ENCODE measurements at regions of chr15 and their contacts with region 1.

Region 1: DNA sequence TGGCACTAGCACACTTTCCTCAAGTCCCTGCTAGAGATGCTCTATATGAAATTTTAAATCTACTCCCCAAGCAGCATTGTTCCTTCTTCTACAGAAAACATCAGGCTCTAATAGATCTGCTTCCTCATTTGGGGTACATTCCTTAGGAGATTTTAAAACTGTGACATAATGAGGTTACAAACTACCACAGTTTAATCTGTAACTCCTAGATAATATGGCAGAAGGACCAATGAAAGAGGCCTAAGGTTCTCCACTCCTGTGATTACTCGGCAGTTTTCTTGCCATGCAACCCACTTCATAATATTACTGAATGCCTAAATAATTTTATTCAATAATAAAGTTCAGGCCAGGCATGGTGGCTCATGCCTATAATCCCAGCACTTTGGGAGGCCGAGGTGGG is 16.1 kb downstream of the ZNF106 start:
- DNase-seq: no peak
- H3K4me3 ChIP-seq: no peak overlapping the region
- H3K27ac ChIP-seq: no peak overlapping the region
- H3K4me1 ChIP-seq: no peaks in the 10 kb centered on the region
- H3K27me3 ChIP-seq: no peaks in the 10 kb centered on the region
- CTCF ChIP-seq: no peak

Region 2: GRCh38 chr15:41989259-41989933 is 485.4 kb before region 1 on chr15:
- CTCF ChIA-PET with region 1: no interaction called
- dilution Hi-C with region 1: no loop called
- in situ Hi-C with region 1: no loop called
- intact Hi-C with region 1: loop called (anchors 10 kb)
- DNase-seq: peak; percentile 53
- H3K4me3 ChIP-seq: no peak overlapping the region
- H3K27ac ChIP-seq: no peak overlapping the region
- H3K4me1 ChIP-seq: no peaks in the 10 kb centered on the region
- H3K27me3 ChIP-seq: no peaks in the 10 kb centered on the region
- CTCF ChIP-seq: peak; percentile 98 to 99

Region 3: DNA sequence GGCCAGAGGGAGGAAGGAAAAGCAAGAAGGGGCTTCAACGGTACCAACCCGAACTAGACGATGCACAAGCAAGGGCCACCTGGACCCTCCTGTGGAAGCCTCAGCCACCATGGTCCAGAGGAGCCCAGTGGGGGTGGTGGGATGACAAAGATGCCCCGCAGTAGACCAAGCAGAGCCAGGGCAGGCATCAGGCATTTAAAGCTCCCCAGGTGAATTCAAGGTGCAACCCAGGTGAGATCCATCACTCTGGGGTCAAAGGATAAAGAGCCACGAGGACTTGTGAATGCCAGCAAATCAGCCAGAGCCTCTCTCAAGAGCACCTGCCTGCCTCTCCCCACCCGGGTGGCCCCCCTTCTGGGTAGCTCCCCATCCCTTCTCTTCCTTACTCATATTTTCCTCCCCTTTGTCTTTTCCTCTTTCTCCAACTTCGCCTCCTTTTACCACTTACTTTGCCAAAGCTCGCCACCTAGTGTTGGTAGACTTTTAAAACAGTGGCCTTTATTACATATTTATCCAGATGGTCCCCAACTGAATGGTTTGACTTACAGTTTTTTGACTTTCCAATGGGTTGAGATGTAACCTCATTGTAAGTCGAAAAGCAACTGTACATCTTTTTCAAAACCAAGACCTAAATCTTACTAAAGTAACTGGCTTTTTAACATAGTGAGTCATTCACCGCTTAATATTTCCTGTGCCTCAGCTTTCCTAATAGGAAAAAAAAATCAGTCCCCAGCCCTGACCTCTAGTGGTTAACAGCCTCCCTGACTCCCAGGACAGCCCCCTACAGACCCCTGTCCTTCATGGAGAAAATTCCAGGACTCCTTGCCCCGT is 337.2 kb before region 1 on chr15:
- CTCF ChIA-PET with region 1: no interaction called
- dilution Hi-C with region 1: no loop called
- in situ Hi-C with region 1: no loop called
- intact Hi-C with region 1: loop called (anchors 5 kb)
- DNase-seq: peak; percentile 40
- H3K4me3 ChIP-seq: no peak overlapping the region
- H3K27ac ChIP-seq: no peak overlapping the region
- H3K4me1 ChIP-seq: no peaks in the 10 kb centered on the region
- H3K27me3 ChIP-seq: no peaks in the 10 kb centered on the region
- CTCF ChIP-seq: peak; percentile 53 to 68

Region 4: GRCh38 chr15:42273102-42273899 is 201.5 kb before region 1 on chr15 and contains the starts of genes GANC and TMEM87A:
- CTCF ChIA-PET with region 1: no interaction called
- dilution Hi-C with region 1: no loop called
- in situ Hi-C with region 1: no loop called
- intact Hi-C with region 1: loop called (anchors 5 kb)
- DNase-seq: peak; percentile 98
- H3K4me3 ChIP-seq: peak within 1 kb of the TSS; percentile 72 to 90 (median 78)
- H3K27ac ChIP-seq: peak within 1 kb of the TSS; percentile 99
- H3K4me1 ChIP-seq: peaks cover 15% of the 10 kb centered on the region
- H3K27me3 ChIP-seq: no peaks in the 10 kb centered on the region
- CTCF ChIP-seq: no peak
- total RNA-seq, gene GANC: 34.0 to 45.7 TPM
- total RNA-seq, gene TMEM87A: 56.3 to 103 TPM

Region 5: DNA sequence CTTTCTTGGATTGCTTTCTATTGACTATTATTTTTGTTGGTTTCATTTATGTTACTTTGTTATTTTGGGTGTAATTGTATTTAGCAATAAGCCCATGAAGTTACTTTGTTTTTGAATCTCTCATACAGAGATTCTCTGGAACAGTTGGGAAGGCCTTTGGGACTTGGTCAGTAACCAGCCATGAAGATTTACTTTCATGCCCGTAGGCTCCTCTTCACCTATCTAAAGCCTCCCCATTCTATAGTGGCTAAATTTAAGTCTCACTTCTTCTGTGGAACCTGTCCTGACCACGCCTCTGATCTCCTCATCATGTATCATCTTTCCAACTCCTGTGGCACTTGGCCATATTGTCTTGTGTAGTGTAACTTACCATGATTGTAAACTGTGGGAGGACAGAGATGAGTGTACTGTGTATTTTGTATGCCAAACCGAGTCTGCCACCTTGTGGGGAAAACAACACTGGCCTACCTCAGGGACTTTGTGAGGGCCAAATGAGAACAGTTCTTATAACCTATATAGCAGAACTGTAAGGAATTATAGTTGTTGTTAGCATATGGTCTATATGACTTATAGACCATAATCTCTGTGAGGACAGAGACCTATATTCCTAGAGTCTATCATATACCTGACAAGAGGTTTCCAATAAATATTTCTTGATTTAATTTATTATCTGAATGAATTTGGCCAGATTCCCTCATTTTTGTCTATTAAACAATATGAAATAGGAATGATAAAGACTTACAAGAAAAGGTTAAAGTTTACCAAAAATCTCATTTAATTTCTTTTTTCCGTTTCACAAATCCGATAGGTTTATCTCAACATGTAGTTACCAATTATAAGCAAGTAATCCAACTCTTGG is 175.6 kb after region 1 on chr15:
- CTCF ChIA-PET with region 1: no interaction called
- dilution Hi-C with region 1: no loop called
- in situ Hi-C with region 1: no loop called
- intact Hi-C with region 1: loop called (anchors 1 kb)
- DNase-seq: peak; percentile 85
- H3K4me3 ChIP-seq: no peak overlapping the region
- H3K27ac ChIP-seq: no peak overlapping the region
- H3K4me1 ChIP-seq: peaks cover 5% of the 10 kb centered on the region
- H3K27me3 ChIP-seq: no peaks in the 10 kb centered on the region
- CTCF ChIP-seq: peak; percentile 88 to 94